ENCODE measurements at regions of chr11 and their contacts with region 1.

Region 1: GRCh38 chr11:44868455-44869421 is 81.9 kb downstream of the TP53I11 start:
- DNase-seq: no peak
- H3K4me3 ChIP-seq: no peak overlapping the region
- H3K27ac ChIP-seq: peak overlapping the region; percentile 7 to 33
- H3K4me1 ChIP-seq: no peaks in the 10 kb centered on the region
- H3K27me3 ChIP-seq: no peaks in the 10 kb centered on the region
- CTCF ChIP-seq: no peak
- POLR2A ChIP-seq: no peak

Region 2: GRCh38 chr11:44833877-44834452 is 34.8 kb before region 1 on chr11:
- intact Hi-C with region 1: loop called (anchors 2 kb)
- DNase-seq: no peak
- H3K4me3 ChIP-seq: no peak overlapping the region
- H3K27ac ChIP-seq: peak overlapping the region; percentile 36 to 49
- H3K4me1 ChIP-seq: no peaks in the 10 kb centered on the region
- H3K27me3 ChIP-seq: no peaks in the 10 kb centered on the region
- CTCF ChIP-seq: no peak
- POLR2A ChIP-seq: no peak

Measured in prostate gland (tissue), 2 donors.